ENCODE measurements at regions of chr6 and their contacts with region 1.

Region 1: GRCh38 chr6:53005663-53006250 is 10.7 kb upstream of the GSTA4 start:
- DNase-seq: no peak
- ATAC-seq: no peak
- H3K4me3 ChIP-seq: no peak overlapping the region
- H3K4me3 Mint-ChIP-seq: no peak overlapping the region
- H3K27ac ChIP-seq: no peak overlapping the region
- H3K27ac Mint-ChIP-seq: no peak overlapping the region
- H3K4me1 ChIP-seq: no peaks in the 10 kb centered on the region
- H3K4me1 Mint-ChIP-seq: no peaks in the 10 kb centered on the region
- H3K27me3 ChIP-seq: no peaks in the 10 kb centered on the region
- H3K27me3 Mint-ChIP-seq: no peaks in the 10 kb centered on the region
- CTCF ChIP-seq: no peak

Region 2: GRCh38 chr6:53042112-53042511 is 36.4 kb after region 1 on chr6:
- CTCF ChIA-PET with region 1: no interaction called
- POLR2A ChIA-PET with region 1: no interaction called
- intact Hi-C with region 1: loop called in 1 of 2 experiments (anchors 5 kb)
- DNase-seq: no peak
- ATAC-seq: no peak
- H3K4me3 ChIP-seq: no peak overlapping the region
- H3K4me3 Mint-ChIP-seq: no peak overlapping the region
- H3K27ac ChIP-seq: no peak overlapping the region
- H3K27ac Mint-ChIP-seq: no peak overlapping the region
- H3K4me1 ChIP-seq: no peaks in the 10 kb centered on the region
- H3K4me1 Mint-ChIP-seq: peaks cover 5% of the 10 kb centered on the region
- H3K27me3 ChIP-seq: no peaks in the 10 kb centered on the region
- H3K27me3 Mint-ChIP-seq: no peaks in the 10 kb centered on the region
- CTCF ChIP-seq: no peak

Measured in CD8-positive, alpha-beta T cell (primary cell).